GM10248 (cell line): ENCODE measurements at regions of chr3 and their contacts with region 1.

Region 1: DNA sequence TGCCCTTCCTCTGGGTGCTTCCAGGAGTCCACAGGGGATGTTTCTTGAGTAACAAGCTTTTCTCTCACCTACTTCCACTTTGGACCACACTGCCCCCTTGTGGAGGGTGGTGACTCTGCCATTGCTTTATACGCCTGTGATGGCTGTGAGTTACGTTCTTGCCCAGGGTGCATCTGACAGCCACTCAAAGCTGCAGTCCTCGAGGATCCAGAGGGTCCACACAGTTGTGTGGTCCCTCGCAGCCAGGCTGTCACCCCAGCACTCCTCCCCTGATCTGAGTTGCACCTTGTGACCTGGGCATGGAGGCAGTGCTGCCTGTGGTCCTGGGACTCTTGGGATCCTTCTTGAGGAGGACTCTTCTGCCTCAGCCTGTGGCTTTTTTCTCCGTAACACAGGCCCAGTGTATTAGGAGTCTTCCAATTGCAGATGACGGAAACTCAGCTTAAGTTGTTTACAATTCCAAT is 23.4 kb downstream of the FOXL2 start:
- DNase-seq: peak; percentile 82
- CTCF ChIP-seq: peak; percentile 82

Region 2: GRCh38 chr3:138408751-138409161 is 514.8 kb before region 1 on chr3:
- CTCF ChIA-PET with region 1: interaction called, 81 read pairs
- POLR2A ChIA-PET with region 1: no interaction called
- DNase-seq: no peak
- CTCF ChIP-seq: no peak

Region 3: GRCh38 chr3:138479438-138479863 is 444.1 kb before region 1 on chr3:
- CTCF ChIA-PET with region 1: interaction called, 30 read pairs
- POLR2A ChIA-PET with region 1: no interaction called
- DNase-seq: peak; percentile 53
- CTCF ChIP-seq: peak; percentile 73

Region 4: DNA sequence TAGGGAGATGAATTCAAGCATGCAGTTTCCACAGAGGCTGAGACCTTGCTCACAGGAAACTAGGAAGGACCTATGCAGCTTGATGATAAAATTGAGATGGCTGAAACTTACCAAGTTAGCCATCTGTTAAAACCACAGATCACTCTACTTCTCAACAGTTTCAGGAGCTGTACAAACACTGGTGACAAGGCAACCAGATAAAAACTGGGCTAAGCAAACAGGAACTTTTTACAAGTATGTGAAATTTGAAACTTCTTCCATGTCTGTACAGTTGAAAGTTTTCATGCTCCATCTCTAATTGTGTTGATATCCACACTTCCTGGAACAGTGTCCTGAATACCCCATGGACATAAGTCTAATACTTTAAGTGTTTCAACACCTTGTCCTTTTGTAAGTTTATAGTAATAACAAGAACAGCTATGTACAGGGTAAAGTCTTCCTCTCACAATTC is 236.8 kb before region 1 on chr3:
- CTCF ChIA-PET with region 1: interaction called, 22 read pairs
- POLR2A ChIA-PET with region 1: no interaction called
- DNase-seq: peak; percentile 59
- CTCF ChIP-seq: no peak

Region 5: GRCh38 chr3:138717348-138717747 is 206.2 kb before region 1 on chr3:
- CTCF ChIA-PET with region 1: interaction called, 16 read pairs
- POLR2A ChIA-PET with region 1: no interaction called
- DNase-seq: no peak
- CTCF ChIP-seq: no peak

Region 6: GRCh38 chr3:138907539-138907938 is 16.0 kb before region 1 on chr3:
- CTCF ChIA-PET with region 1: interaction called, 20 read pairs
- POLR2A ChIA-PET with region 1: interaction called, 3 read pairs
- DNase-seq: no peak
- CTCF ChIP-seq: no peak

Region 7: GRCh38 chr3:138941259-138941885 is 17.8 kb after region 1 on chr3:
- CTCF ChIA-PET with region 1: interaction called, 178 read pairs
- POLR2A ChIA-PET with region 1: no interaction called
- DNase-seq: peak; percentile 25
- CTCF ChIP-seq: peak; percentile 41

Region 8: GRCh38 chr3:139074565-139075115 is 151.1 kb after region 1 on chr3:
- CTCF ChIA-PET with region 1: no interaction called
- POLR2A ChIA-PET with region 1: no interaction called
- DNase-seq: no peak
- CTCF ChIP-seq: no peak